ENCODE measurements at regions of chr14 and their contacts with region 1.

Region 1: DNA sequence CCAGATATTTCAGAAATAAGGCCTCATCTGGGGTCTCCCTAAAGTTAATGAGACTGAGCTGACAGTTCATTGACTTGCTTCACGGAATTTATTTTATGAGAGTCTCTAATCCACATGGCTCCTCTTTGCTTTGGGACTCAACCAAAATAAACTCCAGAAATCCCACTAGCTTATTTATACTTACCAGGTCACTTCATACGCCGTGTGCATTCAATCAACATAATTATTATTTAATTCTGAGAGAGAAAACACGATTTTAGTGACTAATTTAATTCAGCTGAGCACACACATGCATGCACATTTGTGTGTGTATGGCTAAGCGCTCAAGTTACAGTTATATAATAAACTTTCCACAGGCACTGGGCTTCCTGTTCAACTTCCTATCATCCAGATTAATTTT is 333.4 kb upstream of the CCDC196 start:
- DNase-seq: no peak
- H3K4me3 ChIP-seq: no peak overlapping the region
- H3K27ac ChIP-seq: no peak overlapping the region
- H3K4me1 ChIP-seq: peaks cover 0 to 3% (median 0%) of the 10 kb centered on the region in 4 donors
- H3K27me3 ChIP-seq: no peaks in the 10 kb centered on the region
- CTCF ChIP-seq: no peak

Region 2: GRCh38 chr14:65927931-65928356 is 224.8 kb before region 1 on chr14:
- intact Hi-C with region 1: no loop called
- DNase-seq: no peak
- H3K4me3 ChIP-seq: no peak overlapping the region
- H3K27ac ChIP-seq: no peak overlapping the region
- H3K4me1 ChIP-seq: no peaks in the 10 kb centered on the region
- H3K27me3 ChIP-seq: no peaks in the 10 kb centered on the region
- CTCF ChIP-seq: no peak

Region 3: DNA sequence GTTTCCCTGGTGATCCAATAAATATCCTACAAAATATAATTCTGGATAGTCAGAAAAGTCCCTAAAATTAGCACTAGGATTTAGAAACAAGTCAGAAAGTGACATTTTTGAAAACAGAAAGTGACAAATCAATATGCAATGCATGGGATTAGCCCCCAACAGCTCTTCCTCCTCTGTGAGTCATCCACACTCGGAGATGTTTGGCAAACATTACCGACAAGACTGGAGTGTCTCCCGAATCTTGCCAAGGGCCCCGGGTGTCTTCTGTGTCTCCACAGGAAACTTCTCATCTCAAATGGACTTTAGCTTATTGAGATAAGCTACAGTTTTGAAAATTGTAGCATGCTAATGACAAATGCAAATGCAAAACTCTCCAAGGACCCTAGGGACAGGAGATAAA is 65.5 kb before region 1 on chr14:
- intact Hi-C with region 1: loop called (anchors 2 kb)
- DNase-seq: no peak
- H3K4me3 ChIP-seq: no peak overlapping the region
- H3K27ac ChIP-seq: no peak overlapping the region
- H3K4me1 ChIP-seq: no peaks in the 10 kb centered on the region
- H3K27me3 ChIP-seq: no peaks in the 10 kb centered on the region
- CTCF ChIP-seq: no peak

Region 4: GRCh38 chr14:66109426-66109825 is 43.3 kb before region 1 on chr14:
- intact Hi-C with region 1: loop called (anchors 2 kb)
- DNase-seq: no peak
- H3K4me3 ChIP-seq: no peak overlapping the region
- H3K27ac ChIP-seq: no peak overlapping the region
- H3K4me1 ChIP-seq: no peaks in the 10 kb centered on the region
- H3K27me3 ChIP-seq: no peaks in the 10 kb centered on the region
- CTCF ChIP-seq: no peak

Measured in tibial artery (tissue), 4 donors.